Right lobe of liver (tissue), 6 donors: ENCODE measurements at regions of chr17 and their contacts with region 1.

Region 1: DNA sequence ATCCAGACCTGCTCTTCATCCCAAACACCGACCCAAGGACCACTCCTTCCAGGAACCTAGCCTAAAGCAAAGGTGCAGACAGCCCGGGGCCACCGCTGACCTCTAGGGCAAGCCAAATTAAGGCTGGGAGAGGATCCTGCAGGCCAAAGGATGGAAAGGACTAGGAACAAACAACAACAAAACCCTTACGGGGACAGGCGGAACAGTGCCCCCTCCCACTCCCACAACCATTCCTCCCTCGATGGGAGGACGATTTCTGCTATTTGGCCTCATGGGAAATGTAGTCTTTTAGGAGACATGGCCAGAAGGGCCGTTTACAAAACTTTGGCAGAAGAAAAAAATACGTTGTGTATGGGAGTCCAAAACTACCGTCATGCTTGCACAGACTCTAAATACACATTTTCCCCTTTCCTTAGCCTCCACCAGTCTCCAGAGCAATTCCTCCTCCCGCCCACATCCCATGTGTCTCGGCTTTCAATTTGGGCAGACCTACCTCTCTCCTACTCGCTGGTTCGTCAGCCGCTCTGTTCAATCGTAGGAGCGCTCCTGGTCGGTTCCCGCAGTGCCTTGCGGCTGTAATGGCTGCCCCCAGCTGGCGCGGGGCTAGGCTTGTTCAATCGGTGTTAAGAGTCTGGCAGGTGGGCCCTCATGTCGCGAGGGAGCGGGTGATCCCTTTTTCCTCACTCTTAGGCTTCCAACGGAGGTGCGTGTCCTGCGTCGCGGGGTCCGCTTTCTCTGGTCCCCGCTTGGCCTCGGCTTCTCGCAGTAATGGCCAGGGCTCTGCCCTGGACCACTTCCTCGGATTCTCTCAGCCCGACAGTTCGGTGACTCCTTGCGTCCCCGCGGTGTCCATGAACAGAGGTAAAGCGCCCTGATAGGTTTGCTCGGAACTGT is at the start of gene ERAL1:
- DNase-seq: peak; percentile 86 to 91 (median 90)
- ATAC-seq: peak; percentile 99 to 100 (median 100)
- H3K4me3 ChIP-seq: peak within 1 kb of the TSS; percentile 78 to 96 (median 96)
- H3K27ac ChIP-seq: peak within 1 kb of the TSS; percentile 46 to 54 (median 50)
- H3K4me1 ChIP-seq: peaks cover 0 to 12% (median 3%) of the 10 kb centered on the region in 4 donors
- H3K27me3 ChIP-seq: no peaks in the 10 kb centered on the region
- CTCF ChIP-seq: no peak
- POLR2A ChIP-seq: peak; percentile 57
- total RNA-seq, gene ERAL1: 21.6 to 47.1 (median 23.4) TPM

Region 2: GRCh38 chr17:28763804-28764266 is 90.9 kb before region 1 on chr17:
- intact Hi-C with region 1: loop called in 1 of 2 experiments (anchors 10 kb)
- DNase-seq: peak in 2 of 3 donors; percentile 57 to 81
- ATAC-seq: peak; percentile 72 to 82 (median 76)
- H3K4me3 ChIP-seq: no peak overlapping the region
- H3K27ac ChIP-seq: no peak overlapping the region
- H3K4me1 ChIP-seq: peaks cover 0 to 11% (median 0%) of the 10 kb centered on the region in 4 donors
- H3K27me3 ChIP-seq: no peaks in the 10 kb centered on the region
- CTCF ChIP-seq: peak; percentile 93 to 96 (median 94)
- POLR2A ChIP-seq: no peak

Region 3: DNA sequence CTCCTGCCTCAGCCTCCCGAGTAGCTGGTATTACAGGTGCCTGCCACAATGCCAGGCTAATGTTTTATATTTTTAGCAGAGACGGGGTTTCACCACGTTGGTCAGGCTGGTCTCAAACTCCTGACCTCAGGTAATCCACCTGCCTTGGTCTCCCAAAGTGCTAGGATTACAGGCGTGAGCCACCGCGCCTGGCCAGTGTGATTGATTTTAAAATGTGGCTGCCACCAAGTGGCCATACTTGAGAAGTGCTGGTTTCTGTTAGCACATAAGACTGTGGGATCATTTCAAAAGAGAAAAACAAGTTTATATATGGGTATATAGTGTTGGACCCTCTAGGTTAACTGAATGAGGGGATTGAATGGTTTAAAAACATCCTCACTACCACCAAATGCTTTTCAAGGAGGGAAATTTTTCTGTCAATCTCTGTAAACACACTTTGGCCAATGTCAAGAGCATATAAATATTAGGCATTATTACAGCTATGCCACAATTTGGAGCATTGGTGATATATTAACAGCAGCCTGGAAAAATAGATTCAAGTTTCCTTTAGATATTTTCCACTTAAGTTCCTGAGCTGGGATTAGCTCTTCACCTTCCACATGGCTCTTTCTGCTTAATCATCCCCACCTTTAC is 61.7 kb after region 1 on chr17:
- intact Hi-C with region 1: loop called in 1 of 2 experiments (anchors 10 kb)
- DNase-seq: peak in 1 of 3 donors; percentile 48
- ATAC-seq: peak; percentile 60 to 77 (median 69)
- H3K4me3 ChIP-seq: no peak overlapping the region
- H3K27ac ChIP-seq: no peak overlapping the region
- H3K4me1 ChIP-seq: peaks cover 0 to 18% (median 8%) of the 10 kb centered on the region in 4 donors
- H3K27me3 ChIP-seq: no peaks in the 10 kb centered on the region
- CTCF ChIP-seq: peak; percentile 70 to 83 (median 76)
- POLR2A ChIP-seq: no peak